GM10248 (cell line): ENCODE measurements at regions of chr1 and their contacts with region 1.

Region 1: GRCh38 chr1:40032240-40032891 is 8.2 kb upstream of the CAP1 start:
- DNase-seq: peak; percentile 57
- CTCF ChIP-seq: peak; percentile 81

Region 2: DNA sequence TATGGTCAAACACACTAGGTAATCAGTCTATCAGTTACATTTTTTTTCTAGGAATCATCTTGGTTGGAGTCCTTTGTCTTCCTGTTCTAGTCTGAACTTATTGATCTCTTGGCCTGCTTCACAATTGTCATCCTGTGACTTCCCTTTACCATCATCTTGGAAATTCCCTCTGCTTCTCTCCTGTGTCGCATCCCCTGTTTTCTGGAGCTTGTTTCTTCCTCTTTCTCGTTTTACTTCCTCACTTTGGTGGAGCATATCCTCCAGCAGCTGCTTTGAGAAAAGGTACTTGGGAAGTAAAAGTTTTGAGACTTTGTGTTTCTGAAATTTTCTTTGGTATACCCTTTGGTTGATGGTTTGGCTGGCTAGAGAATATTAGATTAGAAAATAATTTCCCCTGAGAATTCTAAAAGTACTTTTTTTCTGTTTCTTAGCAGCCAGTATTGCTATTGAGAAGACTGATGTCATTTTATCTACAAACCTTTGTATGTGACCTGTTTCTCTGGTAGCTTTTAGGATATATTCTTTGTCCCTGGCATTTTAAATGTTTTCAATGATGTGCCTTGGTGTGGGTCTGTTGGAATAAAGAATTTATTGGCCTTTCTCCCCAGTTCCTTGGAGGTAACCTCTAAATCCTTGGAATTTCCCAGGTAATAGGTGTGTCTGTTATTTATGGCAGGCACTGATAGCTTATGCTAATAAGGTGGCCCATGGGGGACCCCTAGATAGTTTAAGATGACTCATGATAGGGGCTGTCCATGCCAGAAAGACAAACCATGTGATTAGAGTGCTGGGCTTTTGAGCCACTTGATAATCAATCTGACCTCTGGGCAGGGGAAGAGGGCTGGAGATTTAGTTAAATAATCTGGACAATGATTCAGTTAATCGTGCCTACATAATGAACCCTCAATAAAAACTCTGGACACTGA is 124.6 kb before region 1 on chr1:
- CTCF ChIA-PET with region 1: interaction called, 12 read pairs
- POLR2A ChIA-PET with region 1: no interaction called
- DNase-seq: no peak
- CTCF ChIP-seq: no peak

Region 3: GRCh38 chr1:39995973-39996393 is 36.4 kb before region 1 on chr1:
- CTCF ChIA-PET with region 1: interaction called, 26 read pairs
- POLR2A ChIA-PET with region 1: no interaction called
- DNase-seq: peak; percentile 79
- CTCF ChIP-seq: no peak

Region 4: DNA sequence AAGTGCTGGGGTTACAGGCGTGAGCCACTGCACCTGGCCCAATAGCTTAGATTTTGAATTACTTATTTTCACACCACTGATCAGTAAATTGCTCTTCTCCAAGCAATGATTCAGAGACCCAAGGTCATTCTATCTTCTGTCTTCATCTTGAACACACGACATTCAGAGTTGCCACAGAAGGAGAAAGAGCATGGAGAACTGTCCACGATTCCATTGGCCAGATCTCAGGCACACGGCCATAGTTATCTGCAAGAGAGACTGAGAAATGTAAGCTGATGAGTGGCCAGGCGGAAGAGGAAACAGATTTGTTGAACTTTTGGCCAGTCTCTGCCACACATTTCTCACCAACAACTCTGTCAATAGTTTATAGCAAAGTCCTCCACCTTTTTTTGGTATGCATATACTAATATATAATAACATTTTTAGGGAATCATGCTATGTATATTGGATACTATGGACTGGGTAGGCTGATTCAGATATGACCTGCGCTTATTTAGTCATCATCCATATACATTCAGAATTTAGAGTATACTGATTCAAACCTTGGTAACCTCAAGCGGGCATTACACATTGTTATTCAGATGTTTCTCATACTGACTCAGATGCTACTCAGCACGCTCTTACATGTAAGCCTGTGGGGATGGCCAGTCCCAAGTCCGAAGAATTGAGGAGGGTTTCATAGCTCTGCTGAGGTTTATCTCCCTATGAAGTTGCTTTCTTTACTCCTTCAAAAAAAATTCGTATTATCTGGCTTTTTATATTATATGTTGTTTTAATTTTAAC is 17.4 kb before region 1 on chr1:
- CTCF ChIA-PET with region 1: interaction called, 21 read pairs
- POLR2A ChIA-PET with region 1: no interaction called
- DNase-seq: no peak
- CTCF ChIP-seq: no peak

Region 5: GRCh38 chr1:40059338-40059959 is 27.1 kb after region 1 on chr1:
- CTCF ChIA-PET with region 1: interaction called, 20 read pairs
- POLR2A ChIA-PET with region 1: no interaction called
- DNase-seq: no peak
- CTCF ChIP-seq: peak; percentile 32